ENCODE measurements at regions of chr19 and their contacts with region 1.

Region 1: GRCh38 chr19:34193439-34193838 is 21.1 kb downstream of the LSM14A start:
- DNase-seq: peak; percentile 36
- ATAC-seq: peak; percentile 66
- H3K4me3 ChIP-seq: no peak overlapping the region
- H3K4me3 Mint-ChIP-seq: peak overlapping the region; percentile 73
- H3K27ac ChIP-seq: peak overlapping the region; percentile 5 to 73
- H3K27ac Mint-ChIP-seq: peak overlapping the region; percentile 75
- H3K4me1 ChIP-seq: peaks cover 43 to 51% of the 10 kb centered on the region in 2 donors
- H3K4me1 Mint-ChIP-seq: peaks cover 60% of the 10 kb centered on the region
- H3K27me3 ChIP-seq: no peaks in the 10 kb centered on the region
- H3K27me3 Mint-ChIP-seq: no peaks in the 10 kb centered on the region
- CTCF ChIP-seq: no peak

Region 2: GRCh38 chr19:34178274-34178610 is 15.2 kb before region 1 on chr19:
- CTCF ChIA-PET with region 1: interaction called, 5 read pairs
- POLR2A ChIA-PET with region 1: interaction called, 10 read pairs
- intact Hi-C with region 1: loop called (anchors 2 kb)
- DNase-seq: no peak
- ATAC-seq: no peak
- H3K4me3 ChIP-seq: peak overlapping the region in 2 of 5 experiments; percentile 1 to 12
- H3K4me3 Mint-ChIP-seq: peak overlapping the region; percentile 78
- H3K27ac ChIP-seq: no peak overlapping the region
- H3K27ac Mint-ChIP-seq: peak overlapping the region; percentile 64
- H3K4me1 ChIP-seq: peaks cover 59 to 76% of the 10 kb centered on the region in 2 donors
- H3K4me1 Mint-ChIP-seq: peaks cover 82% of the 10 kb centered on the region
- H3K27me3 ChIP-seq: no peaks in the 10 kb centered on the region
- H3K27me3 Mint-ChIP-seq: no peaks in the 10 kb centered on the region
- CTCF ChIP-seq: no peak